CD4-positive, alpha-beta memory T cell (primary cell): ENCODE measurements at regions of chr2 and their contacts with region 1.

Region 1: DNA sequence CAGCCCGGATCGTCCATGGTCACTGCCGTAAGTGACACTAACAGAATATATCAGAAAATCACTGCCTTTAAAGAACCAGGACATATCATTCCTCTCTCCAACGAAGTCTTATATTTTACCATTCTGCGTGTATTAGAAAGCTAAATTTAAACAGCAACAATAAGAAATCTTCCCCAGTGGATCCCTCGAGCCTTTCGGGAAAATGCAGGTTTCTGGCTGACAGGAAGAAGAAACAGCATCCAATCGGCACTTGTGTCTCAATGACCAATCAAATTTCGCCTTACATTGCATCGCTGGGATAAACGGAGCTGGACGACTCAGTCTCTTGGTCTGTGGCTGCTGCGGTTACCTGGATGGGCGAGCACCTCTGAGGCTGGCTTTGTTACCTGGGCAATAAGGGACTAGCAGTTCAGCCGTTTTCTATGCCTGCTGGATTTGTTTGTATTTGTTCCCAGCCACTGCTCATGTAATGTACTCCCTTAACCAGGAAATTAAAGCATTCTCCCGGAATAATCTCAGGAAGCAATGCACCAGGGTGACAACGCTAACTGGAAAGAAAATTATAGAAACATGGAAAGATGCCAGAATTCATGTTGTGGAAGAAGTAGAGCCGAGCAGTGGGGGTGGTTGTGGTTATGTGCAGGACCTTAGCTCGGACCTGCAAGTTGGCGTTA is at the start of gene DUSP19:
- DNase-seq: peak; percentile 75 to 84 (median 78)
- H3K4me3 ChIP-seq: peak within 1 kb of the TSS; percentile 75 to 88
- H3K4me3 Mint-ChIP-seq: peak within 1 kb of the TSS; percentile 94 to 98 (median 95)
- H3K27ac ChIP-seq: peak within 1 kb of the TSS; percentile 41
- H3K27ac Mint-ChIP-seq: peak within 1 kb of the TSS; percentile 80 to 94 (median 88)
- H3K4me1 ChIP-seq: peaks cover 11% of the 10 kb centered on the region
- H3K4me1 Mint-ChIP-seq: peaks cover 4 to 16% (median 8%) of the 10 kb centered on the region in 4 donors
- H3K27me3 ChIP-seq: no peaks in the 10 kb centered on the region
- H3K27me3 Mint-ChIP-seq: no peaks in the 10 kb centered on the region
- total RNA-seq, gene DUSP19: 3.3 to 3.7 TPM

Region 2: GRCh38 chr2:182682210-182682609 is 396.4 kb before region 1 on chr2:
- CTCF ChIA-PET with region 1: no interaction called
- POLR2A ChIA-PET with region 1: no interaction called
- intact Hi-C with region 1: no loop called
- DNase-seq: no peak
- H3K4me3 ChIP-seq: no peak overlapping the region
- H3K4me3 Mint-ChIP-seq: no peak overlapping the region
- H3K27ac ChIP-seq: no peak overlapping the region
- H3K27ac Mint-ChIP-seq: no peak overlapping the region
- H3K4me1 ChIP-seq: no peaks in the 10 kb centered on the region
- H3K4me1 Mint-ChIP-seq: no peaks in the 10 kb centered on the region
- H3K27me3 ChIP-seq: no peaks in the 10 kb centered on the region
- H3K27me3 Mint-ChIP-seq: peaks cover 8 to 12% of the 10 kb centered on the region in 2 donors

Region 3: DNA sequence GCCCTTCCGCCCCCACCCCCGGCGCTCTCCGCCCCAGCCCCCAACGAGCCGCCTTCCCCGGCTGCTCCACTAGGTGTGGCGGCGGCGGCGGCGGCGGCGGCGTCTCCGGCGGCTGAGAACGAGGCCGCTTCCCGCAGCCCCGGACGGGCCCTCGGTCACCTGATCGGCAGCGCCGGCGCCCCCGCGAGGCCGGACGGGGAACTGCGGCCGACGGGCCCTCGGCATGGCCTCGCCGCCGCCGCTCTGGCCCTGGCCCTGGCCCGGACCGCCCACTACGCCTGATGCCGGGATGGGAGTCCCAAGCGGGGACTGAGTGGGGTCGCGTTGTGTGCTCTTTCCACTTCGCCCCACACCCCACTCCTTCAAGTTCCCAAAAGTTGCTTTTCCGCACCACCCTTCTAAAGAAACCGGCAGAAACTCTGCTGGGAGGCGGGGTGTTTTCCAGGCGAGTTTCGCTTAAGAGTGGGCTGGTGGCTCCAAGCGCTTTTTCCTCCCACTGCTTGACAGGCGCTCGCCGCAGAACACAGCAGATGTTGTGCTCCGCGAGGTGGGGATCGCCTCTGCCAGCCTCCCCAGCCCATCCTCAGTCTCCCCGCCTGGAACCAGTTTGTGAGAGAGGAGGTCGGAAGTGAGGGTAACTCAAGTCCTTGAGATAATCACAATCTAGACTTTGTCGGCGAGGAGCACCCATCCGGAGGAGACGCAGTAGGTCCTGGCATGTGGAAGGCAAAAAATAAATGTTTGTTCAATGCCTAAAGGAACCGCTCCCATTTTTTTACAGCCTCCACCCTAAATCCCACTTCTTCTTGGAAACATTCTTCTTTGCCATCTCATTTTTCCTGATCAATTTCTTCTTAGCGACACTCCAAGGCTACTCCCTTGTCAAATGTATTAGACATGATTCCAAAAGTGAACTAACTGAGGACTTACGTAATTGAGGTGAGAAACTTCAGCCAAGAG is 40.0 kb before region 1 on chr2 and contains the start of gene NCKAP1:
- CTCF ChIA-PET with region 1: interaction called, 3 read pairs
- POLR2A ChIA-PET with region 1: interaction called, 6 read pairs
- intact Hi-C with region 1: loop called (anchors 1 kb)
- DNase-seq: peak; percentile 83 to 86 (median 85)
- H3K4me3 ChIP-seq: peak within 1 kb of the TSS; percentile 2 to 66
- H3K4me3 Mint-ChIP-seq: peak within 1 kb of the TSS; percentile 83 to 96 (median 87)
- H3K27ac ChIP-seq: no peak within 1 kb of the TSS
- H3K27ac Mint-ChIP-seq: peak within 1 kb of the TSS; percentile 57 to 87 (median 72)
- H3K4me1 ChIP-seq: peaks cover 37% of the 10 kb centered on the region
- H3K4me1 Mint-ChIP-seq: peaks cover 26 to 38% (median 31%) of the 10 kb centered on the region in 4 donors
- H3K27me3 ChIP-seq: peaks cover 13% of the 10 kb centered on the region
- H3K27me3 Mint-ChIP-seq: peaks cover 22 to 28% of the 10 kb centered on the region in 2 donors
- total RNA-seq, gene NCKAP1: 4.9 to 6.3 TPM

Region 4: GRCh38 chr2:183124222-183124956 is 45.8 kb after region 1 on chr2 and contains the start of gene NUP35:
- CTCF ChIA-PET with region 1: interaction called, 4 read pairs
- POLR2A ChIA-PET with region 1: interaction called, 6 read pairs
- intact Hi-C with region 1: loop called (anchors 1 kb)
- DNase-seq: peak; percentile 85 to 87 (median 87)
- H3K4me3 ChIP-seq: peak within 1 kb of the TSS; percentile 85 to 94
- H3K4me3 Mint-ChIP-seq: peak within 1 kb of the TSS; percentile 93 to 98 (median 96)
- H3K27ac ChIP-seq: peak within 1 kb of the TSS; percentile 73
- H3K27ac Mint-ChIP-seq: peak within 1 kb of the TSS; percentile 97 to 98 (median 98)
- H3K4me1 ChIP-seq: peaks cover 24% of the 10 kb centered on the region
- H3K4me1 Mint-ChIP-seq: peaks cover 18 to 36% (median 31%) of the 10 kb centered on the region in 4 donors
- H3K27me3 ChIP-seq: no peaks in the 10 kb centered on the region
- H3K27me3 Mint-ChIP-seq: peaks cover 6% of the 10 kb centered on the region in 2 donors
- total RNA-seq, gene NUP35: 15.9 to 24.0 TPM